ENCODE measurements at regions of chr13 and their contacts with region 1.

Region 1: GRCh38 chr13:30346153-30346788 is 38.9 kb upstream of the KATNAL1 start:
- DNase-seq: peak; percentile 91
- H3K4me3 Mint-ChIP-seq: peak overlapping the region; percentile 38
- H3K27ac Mint-ChIP-seq: peak overlapping the region; percentile 60
- H3K4me1 Mint-ChIP-seq: peaks cover 37% of the 10 kb centered on the region
- H3K27me3 Mint-ChIP-seq: no peaks in the 10 kb centered on the region

Region 2: GRCh38 chr13:30334663-30335386 is 11.4 kb before region 1 on chr13:
- CTCF ChIA-PET with region 1: interaction called, 23 read pairs
- POLR2A ChIA-PET with region 1: no interaction called
- DNase-seq: peak; percentile 21
- H3K4me3 Mint-ChIP-seq: no peak overlapping the region
- H3K27ac Mint-ChIP-seq: no peak overlapping the region
- H3K4me1 Mint-ChIP-seq: peaks cover 17% of the 10 kb centered on the region
- H3K27me3 Mint-ChIP-seq: no peaks in the 10 kb centered on the region

Measured in activated CD4-positive, alpha-beta memory T cell treated with anti-CD3 and anti-CD28 coated beads, Interleukin-2, amount 10 ng/mL, durations not matched to agents 7 days and 5 days (primary cell).